ENCODE measurements at regions of chr22 and their contacts with region 1.

Region 1: GRCh38 chr22:24768537-24769374 is 5.8 kb downstream of the PIWIL3 start:
- DNase-seq: peak; percentile 70
- H3K4me3 ChIP-seq: no peak overlapping the region
- H3K27ac ChIP-seq: no peak overlapping the region
- H3K4me1 ChIP-seq: no peaks in the 10 kb centered on the region
- H3K27me3 ChIP-seq: peaks cover 0 to 9% (median 0%) of the 10 kb centered on the region in 3 donors
- CTCF ChIP-seq: peak; percentile 55 to 67 (median 64)
- EP300 ChIP-seq: no peak
- POLR2A ChIP-seq: no peak

Region 2: DNA sequence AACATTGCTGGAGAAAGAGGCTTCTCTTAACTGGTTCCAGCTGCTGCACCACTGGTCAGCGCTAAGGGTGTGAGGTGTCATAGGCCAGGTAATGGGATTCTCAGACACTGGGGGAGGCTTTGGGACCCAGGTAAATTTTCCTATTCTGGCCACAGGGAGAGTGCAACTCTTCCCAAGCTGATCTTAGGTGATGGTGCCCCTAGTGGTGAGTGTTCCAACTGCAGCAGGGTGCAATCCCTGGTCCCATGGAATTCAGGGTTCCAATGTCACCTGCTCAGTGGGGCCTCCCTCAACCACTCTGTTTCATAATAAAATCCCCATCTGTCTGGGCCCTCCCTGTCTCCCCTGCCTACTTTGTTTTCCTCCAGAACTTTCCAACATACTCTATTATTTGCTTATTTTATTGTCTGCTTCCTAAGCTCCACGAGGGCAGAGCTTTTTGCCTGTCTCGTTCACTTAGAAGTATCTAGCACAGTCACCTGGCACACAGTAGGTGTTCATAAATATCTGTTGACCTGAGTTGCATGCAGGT is 34.3 kb after region 1 on chr22:
- intact Hi-C with region 1: loop called (anchors 5 kb)
- DNase-seq: no peak
- H3K4me3 ChIP-seq: no peak overlapping the region
- H3K27ac ChIP-seq: no peak overlapping the region
- H3K4me1 ChIP-seq: peaks cover 0 to 20% (median 12%) of the 10 kb centered on the region in 4 donors
- H3K27me3 ChIP-seq: no peaks in the 10 kb centered on the region
- CTCF ChIP-seq: peak in 3 of 4 experiments; percentile 74 to 93 (median 86)
- EP300 ChIP-seq: no peak
- POLR2A ChIP-seq: no peak

Region 3: GRCh38 chr22:24834845-24835570 is 66.3 kb after region 1 on chr22:
- intact Hi-C with region 1: loop called (anchors 5 kb)
- DNase-seq: no peak
- H3K4me3 ChIP-seq: no peak overlapping the region
- H3K27ac ChIP-seq: no peak overlapping the region
- H3K4me1 ChIP-seq: no peaks in the 10 kb centered on the region
- H3K27me3 ChIP-seq: no peaks in the 10 kb centered on the region
- CTCF ChIP-seq: peak in 1 of 4 experiments; percentile 29
- EP300 ChIP-seq: no peak
- POLR2A ChIP-seq: no peak

Region 4: GRCh38 chr22:24845041-24845898 is 76.5 kb after region 1 on chr22:
- intact Hi-C with region 1: loop called (anchors 2 kb)
- DNase-seq: peak; percentile 67
- H3K4me3 ChIP-seq: no peak overlapping the region
- H3K27ac ChIP-seq: no peak overlapping the region
- H3K4me1 ChIP-seq: no peaks in the 10 kb centered on the region
- H3K27me3 ChIP-seq: no peaks in the 10 kb centered on the region
- CTCF ChIP-seq: no peak
- EP300 ChIP-seq: no peak
- POLR2A ChIP-seq: no peak

Region 5: DNA sequence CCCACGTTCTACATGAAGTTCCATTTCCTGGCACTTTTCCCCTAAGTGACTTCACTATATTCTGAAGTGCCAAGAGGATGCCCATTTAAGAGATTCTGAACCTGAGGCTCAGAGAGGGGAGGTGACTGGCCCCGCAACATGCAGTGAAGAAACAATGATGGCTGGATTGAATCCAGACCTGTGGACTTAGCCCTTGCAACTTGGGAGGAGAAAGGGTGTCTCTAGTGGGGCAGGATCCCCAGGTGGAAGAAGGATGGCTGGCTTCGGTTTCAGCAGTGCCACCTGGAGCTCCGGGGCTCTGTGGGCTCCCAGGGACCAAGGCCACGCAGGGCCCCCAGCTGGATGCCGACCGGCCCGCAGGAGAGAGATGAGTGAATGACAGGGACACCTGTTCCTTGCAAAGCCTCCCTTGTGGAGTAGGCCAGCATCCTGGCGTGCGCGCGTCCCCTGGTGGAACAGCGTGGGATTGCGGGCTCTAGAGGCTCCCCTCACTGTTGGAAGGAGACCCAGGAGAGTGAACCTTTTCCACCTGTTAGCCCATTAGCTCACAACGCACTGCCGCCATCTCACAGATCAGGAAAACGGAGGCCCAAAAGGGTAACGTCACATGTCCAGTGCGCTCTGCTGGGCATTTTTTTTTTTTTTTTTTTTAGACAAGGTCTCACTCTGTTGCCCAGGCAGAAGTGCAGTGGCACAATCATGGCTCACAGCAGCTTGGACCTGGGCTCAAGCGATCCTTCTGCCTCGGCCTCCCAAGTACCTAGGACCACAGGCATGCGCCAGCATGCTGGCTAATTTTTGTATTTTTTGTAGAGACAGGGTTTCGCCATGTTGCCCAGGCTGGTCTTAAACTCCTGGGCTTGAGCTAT is 288.5 kb after region 1 on chr22:
- intact Hi-C with region 1: no loop called
- DNase-seq: peak; percentile 69
- H3K4me3 ChIP-seq: no peak overlapping the region
- H3K27ac ChIP-seq: no peak overlapping the region
- H3K4me1 ChIP-seq: no peaks in the 10 kb centered on the region
- H3K27me3 ChIP-seq: no peaks in the 10 kb centered on the region
- CTCF ChIP-seq: peak; percentile 43 to 75 (median 56)
- EP300 ChIP-seq: no peak
- POLR2A ChIP-seq: no peak

Measured in sigmoid colon (tissue), 7 donors.